Adrenal gland (tissue), 19 donors: ENCODE measurements at regions of chr12 and their contacts with region 1.

Region 1: GRCh38 chr12:575948-576612 is 87.2 kb downstream of the NINJ2 start:
- DNase-seq: peak; percentile 66 to 83 (median 74)
- H3K4me3 ChIP-seq: peak overlapping the region in 1 of 4 donors; percentile 7
- H3K27ac ChIP-seq: peak overlapping the region in 1 of 5 donors; percentile 66
- H3K4me1 ChIP-seq: peaks cover 22 to 30% of the 10 kb centered on the region in 2 donors
- H3K27me3 ChIP-seq: no peaks in the 10 kb centered on the region
- CTCF ChIP-seq: peak; percentile 89 to 99 (median 99)
- POLR2A ChIP-seq: no peak

Region 2: GRCh38 chr12:278046-278445 is 298.0 kb before region 1 on chr12:
- intact Hi-C with region 1: no loop called
- DNase-seq: no peak
- H3K4me3 ChIP-seq: no peak overlapping the region
- H3K27ac ChIP-seq: no peak overlapping the region
- H3K4me1 ChIP-seq: no peaks in the 10 kb centered on the region
- H3K27me3 ChIP-seq: no peaks in the 10 kb centered on the region
- CTCF ChIP-seq: no peak
- POLR2A ChIP-seq: no peak

Region 3: GRCh38 chr12:642633-643474 is 66.8 kb after region 1 on chr12:
- intact Hi-C with region 1: loop called in 1 of 2 experiments (anchors 10 kb)
- DNase-seq: peak; percentile 71 to 85 (median 79)
- H3K4me3 ChIP-seq: peak overlapping the region in 3 of 4 donors; percentile 33 to 77 (median 36)
- H3K27ac ChIP-seq: peak overlapping the region; percentile 90 to 99 (median 94)
- H3K4me1 ChIP-seq: peaks cover 34 to 42% of the 10 kb centered on the region in 2 donors
- H3K27me3 ChIP-seq: no peaks in the 10 kb centered on the region
- CTCF ChIP-seq: peak in 5 of 6 experiments; percentile 24 to 51 (median 28)
- POLR2A ChIP-seq: peak in 1 of 2 donors; percentile 56

Region 4: DNA sequence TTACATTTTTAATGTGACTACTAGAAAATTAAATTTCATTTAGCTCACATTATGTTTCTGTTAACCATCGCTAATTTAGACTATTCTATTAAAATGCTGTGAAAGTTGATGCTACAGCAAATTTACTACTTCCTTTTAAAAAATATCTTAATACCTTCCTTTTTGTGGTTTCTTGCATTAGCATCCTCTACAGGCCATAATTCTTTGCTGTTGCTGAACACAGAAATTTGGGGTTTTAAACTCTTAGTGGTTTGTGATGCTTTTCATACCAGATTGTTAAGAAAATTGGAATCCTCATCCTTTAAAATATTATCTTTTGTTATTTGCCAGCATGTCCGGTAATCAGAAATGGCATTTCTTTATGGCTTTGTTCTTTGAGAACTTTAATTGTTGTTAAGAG is 194.4 kb after region 1 on chr12:
- intact Hi-C with region 1: no loop called
- DNase-seq: no peak
- H3K4me3 ChIP-seq: no peak overlapping the region
- H3K27ac ChIP-seq: no peak overlapping the region
- H3K4me1 ChIP-seq: peaks cover 8 to 61% of the 10 kb centered on the region in 2 donors
- H3K27me3 ChIP-seq: no peaks in the 10 kb centered on the region
- CTCF ChIP-seq: no peak
- POLR2A ChIP-seq: no peak

Region 5: GRCh38 chr12:1083889-1084262 is 507.8 kb after region 1 on chr12:
- intact Hi-C with region 1: no loop called
- DNase-seq: peak; percentile 38 to 77 (median 65)
- H3K4me3 ChIP-seq: peak overlapping the region in 1 of 4 donors; percentile 23
- H3K27ac ChIP-seq: peak overlapping the region; percentile 43 to 87 (median 53)
- H3K4me1 ChIP-seq: peaks cover 0 to 15% of the 10 kb centered on the region in 2 donors
- H3K27me3 ChIP-seq: no peaks in the 10 kb centered on the region
- CTCF ChIP-seq: no peak
- POLR2A ChIP-seq: no peak

Region 6: GRCh38 chr12:1138691-1139090 is 562.6 kb after region 1 on chr12:
- intact Hi-C with region 1: no loop called
- DNase-seq: no peak
- H3K4me3 ChIP-seq: no peak overlapping the region
- H3K27ac ChIP-seq: no peak overlapping the region
- H3K4me1 ChIP-seq: peaks cover 0 to 2% of the 10 kb centered on the region in 2 donors
- H3K27me3 ChIP-seq: no peaks in the 10 kb centered on the region
- CTCF ChIP-seq: no peak
- POLR2A ChIP-seq: no peak